SK-N-SH (cell line): ENCODE measurements at regions of chr7 and their contacts with region 1.

Region 1: GRCh38 chr7:132318352-132319318 is 257.6 kb downstream of the PLXNA4 start:
- DNase-seq: peak; percentile 87
- H3K4me3 ChIP-seq: peak overlapping the region in 1 of 2 experiments; percentile 7; a peak in 1 of 4 replicates
- H3K27ac ChIP-seq: no peak overlapping the region
- H3K4me1 ChIP-seq: peaks cover 0 to 39% of the 10 kb centered on the region in 2 experiments; a peak in 2 of 4 replicates
- H3K27me3 ChIP-seq: no peaks in the 10 kb centered on the region; the same call in 1 of the 2 replicates
- CTCF ChIP-seq: peak; percentile 99
- EP300 ChIP-seq: 0 out of 4 replicates have a peak, but pooled peaks of 1 of the 2 experiments have one; percentile 23
- RAD21 ChIP-seq: peak; percentile 100

Region 2: GRCh38 chr7:131688738-131689661 is 629.6 kb before region 1 on chr7:
- CTCF ChIA-PET with region 1: interaction called, 12 read pairs
- POLR2A ChIA-PET with region 1: no interaction called
- DNase-seq: peak; percentile 95
- H3K4me3 ChIP-seq: no peak overlapping the region; a peak in 1 of 4 replicates
- H3K27ac ChIP-seq: no peak overlapping the region
- H3K4me1 ChIP-seq: peaks cover 0 to 4% of the 10 kb centered on the region in 2 experiments; a peak in 1 of 4 replicates
- H3K27me3 ChIP-seq: no peaks in the 10 kb centered on the region
- CTCF ChIP-seq: peak; percentile 99
- EP300 ChIP-seq: no peak
- RAD21 ChIP-seq: peak; percentile 100

Region 3: DNA sequence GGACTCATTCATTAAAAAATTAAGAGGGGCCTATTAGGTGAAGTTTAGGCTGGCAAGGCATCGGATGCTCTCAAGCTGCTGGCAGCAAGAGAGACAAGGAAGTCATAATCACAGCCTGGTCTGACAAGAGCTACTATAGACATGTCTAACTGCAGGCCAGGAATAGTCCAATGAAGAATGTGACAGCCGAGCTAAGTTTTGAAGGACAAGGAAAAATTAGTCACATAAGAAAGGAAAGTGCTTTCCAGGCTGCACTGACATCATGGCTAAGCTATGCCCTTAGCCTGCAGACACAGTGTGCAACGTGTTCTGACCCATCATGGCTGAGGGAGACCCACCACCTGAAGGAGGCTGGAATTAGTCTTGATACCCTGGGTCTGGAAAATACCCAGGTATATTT is 23.5 kb before region 1 on chr7:
- CTCF ChIA-PET with region 1: interaction called, 17 read pairs
- POLR2A ChIA-PET with region 1: no interaction called
- DNase-seq: no peak
- H3K4me3 ChIP-seq: no peak overlapping the region
- H3K27ac ChIP-seq: no peak overlapping the region
- H3K4me1 ChIP-seq: peaks cover 14 to 16% of the 10 kb centered on the region in 2 experiments; a peak in 2 of 4 replicates
- H3K27me3 ChIP-seq: no peaks in the 10 kb centered on the region
- CTCF ChIP-seq: no peak
- EP300 ChIP-seq: no peak
- RAD21 ChIP-seq: no peak

Region 4: DNA sequence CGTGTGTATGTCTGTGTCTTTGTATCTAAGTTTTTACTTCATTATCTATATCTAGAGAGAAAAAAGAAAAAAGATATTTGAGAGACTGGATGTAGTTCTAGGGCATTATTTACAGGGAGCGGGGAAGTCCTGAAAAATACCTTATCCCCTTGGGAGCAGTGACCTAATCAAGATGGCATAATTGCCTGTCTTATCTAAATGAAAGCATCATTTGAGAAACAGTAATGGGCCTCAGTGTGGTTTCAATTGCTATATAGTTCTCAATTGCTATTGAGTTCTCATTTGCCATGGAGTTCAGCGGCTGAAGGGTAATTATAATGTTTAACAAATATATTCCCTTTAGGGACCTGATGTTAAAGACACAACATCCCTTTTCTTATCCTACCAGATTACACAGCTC is 41.1 kb after region 1 on chr7:
- CTCF ChIA-PET with region 1: interaction called, 10 read pairs
- POLR2A ChIA-PET with region 1: no interaction called
- DNase-seq: no peak
- H3K4me3 ChIP-seq: no peak overlapping the region
- H3K27ac ChIP-seq: no peak overlapping the region
- H3K4me1 ChIP-seq: peaks cover 7 to 19% of the 10 kb centered on the region in 2 experiments; a peak in 3 of 4 replicates
- H3K27me3 ChIP-seq: no peaks in the 10 kb centered on the region
- CTCF ChIP-seq: no peak
- EP300 ChIP-seq: no peak
- RAD21 ChIP-seq: no peak

Region 5: GRCh38 chr7:132437730-132438129 is 119.1 kb after region 1 on chr7:
- CTCF ChIA-PET with region 1: interaction called, 15 read pairs
- POLR2A ChIA-PET with region 1: no interaction called
- DNase-seq: no peak
- H3K4me3 ChIP-seq: no peak overlapping the region
- H3K27ac ChIP-seq: no peak overlapping the region; a peak in 1 of 4 replicates
- H3K4me1 ChIP-seq: peaks cover 0 to 56% of the 10 kb centered on the region in 2 experiments; a peak in 2 of 4 replicates
- H3K27me3 ChIP-seq: no peaks in the 10 kb centered on the region
- CTCF ChIP-seq: no peak
- EP300 ChIP-seq: no peak
- RAD21 ChIP-seq: no peak

Region 6: DNA sequence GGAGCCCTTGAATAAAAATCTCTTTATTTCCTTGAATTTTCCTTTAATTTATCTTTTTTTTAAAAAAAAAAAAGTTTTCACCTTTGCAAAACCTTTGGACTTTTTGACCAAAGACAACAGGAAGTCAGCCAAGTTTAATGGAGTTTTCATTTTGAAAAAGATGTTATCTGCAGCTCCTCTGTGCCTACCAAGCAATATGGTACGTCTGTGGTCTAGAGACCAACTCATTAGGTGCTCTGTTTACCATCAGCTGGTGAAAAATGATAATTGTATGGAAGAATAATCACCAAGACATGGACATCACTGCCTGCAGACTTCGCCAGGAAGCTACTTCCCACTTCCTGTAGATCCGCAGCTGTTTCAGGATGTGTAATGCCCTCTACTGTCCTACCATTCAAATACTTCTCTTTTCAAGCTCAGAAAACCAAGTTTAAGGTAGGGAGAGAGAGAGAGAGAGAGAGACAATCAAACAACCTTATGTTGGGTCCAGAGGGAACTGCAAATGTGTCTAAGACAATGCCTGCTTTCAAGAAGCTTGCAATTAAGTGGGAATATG is 238.9 kb after region 1 on chr7:
- CTCF ChIA-PET with region 1: interaction called, 65 read pairs
- POLR2A ChIA-PET with region 1: no interaction called
- DNase-seq: no peak
- H3K4me3 ChIP-seq: no peak overlapping the region
- H3K27ac ChIP-seq: no peak overlapping the region
- H3K4me1 ChIP-seq: peaks cover 0 to 7% of the 10 kb centered on the region in 2 experiments; a peak in 1 of 4 replicates
- H3K27me3 ChIP-seq: no peaks in the 10 kb centered on the region
- CTCF ChIP-seq: peak; percentile 46
- EP300 ChIP-seq: no peak
- RAD21 ChIP-seq: peak; percentile 72